ENCODE measurements at regions of chr16 and their contacts with region 1.

Region 1: DNA sequence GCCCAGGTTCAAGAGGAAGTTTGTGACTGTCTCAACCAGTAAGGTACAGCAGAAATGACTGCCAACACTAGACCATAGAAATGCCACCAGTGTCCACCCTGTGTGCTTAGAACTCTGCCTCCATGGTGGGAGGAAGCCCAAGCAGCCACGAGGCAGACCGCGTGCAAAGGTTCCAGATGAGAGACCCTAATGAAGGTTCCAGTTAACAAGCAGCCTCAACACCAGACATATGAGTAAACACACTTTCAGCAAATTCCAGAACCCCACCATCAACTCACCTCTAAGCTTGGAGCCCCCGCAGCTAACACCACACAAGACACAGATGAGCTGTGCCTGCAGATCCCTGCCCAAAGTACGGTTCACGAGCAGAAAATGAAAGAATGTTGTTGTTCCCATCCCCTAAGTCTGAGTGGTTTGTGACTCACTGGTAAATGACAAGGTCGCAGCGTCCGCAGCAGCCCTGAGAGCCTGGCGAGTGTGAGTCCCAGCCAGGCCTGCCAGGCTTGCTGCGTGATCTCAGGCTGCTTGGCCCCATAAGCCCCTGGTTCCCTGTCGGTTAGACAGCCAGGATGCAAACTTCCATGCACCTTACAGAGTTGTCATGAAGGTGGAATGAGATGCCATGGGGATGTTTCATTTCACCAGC is 193.7 kb downstream of the C16orf95 start:
- DNase-seq: peak in 1 of 2 donors; percentile 48
- H3K4me3 ChIP-seq: no peak overlapping the region
- H3K27ac ChIP-seq: no peak overlapping the region
- H3K4me1 ChIP-seq: peaks cover 0 to 30% (median 25%) of the 10 kb centered on the region in 4 donors
- H3K27me3 ChIP-seq: no peaks in the 10 kb centered on the region
- CTCF ChIP-seq: no peak

Region 2: DNA sequence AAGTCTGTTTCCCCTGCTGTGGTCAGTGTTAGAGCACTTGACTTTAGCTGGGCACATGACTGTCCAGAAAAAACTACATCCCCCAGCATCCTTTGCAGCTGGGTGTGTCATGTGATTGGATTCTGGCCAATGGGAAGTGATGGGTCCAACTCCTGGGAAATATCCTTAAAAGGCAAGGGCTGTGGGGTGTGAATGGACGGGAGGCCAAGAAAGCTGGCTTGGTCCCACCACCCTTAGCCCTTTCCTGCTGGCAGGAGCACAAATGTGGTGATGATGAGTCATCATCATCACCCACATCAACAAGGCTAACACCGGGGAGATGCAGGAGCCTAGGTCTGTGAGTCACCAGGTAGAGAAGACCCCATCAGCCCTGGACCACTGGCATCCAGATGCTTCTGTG is 148.0 kb before region 1 on chr16:
- intact Hi-C with region 1: no loop called
- DNase-seq: peak; percentile 61 to 86
- H3K4me3 ChIP-seq: no peak overlapping the region
- H3K27ac ChIP-seq: peak overlapping the region; percentile 67 to 69
- H3K4me1 ChIP-seq: peaks cover 0 to 13% (median 9%) of the 10 kb centered on the region in 4 donors
- H3K27me3 ChIP-seq: no peaks in the 10 kb centered on the region
- CTCF ChIP-seq: no peak

Region 3: GRCh38 chr16:87174061-87174460 is 50.6 kb after region 1 on chr16:
- intact Hi-C with region 1: loop called (anchors 2 kb)
- DNase-seq: no peak
- H3K4me3 ChIP-seq: no peak overlapping the region
- H3K27ac ChIP-seq: no peak overlapping the region
- H3K4me1 ChIP-seq: peaks cover 0 to 16% (median 14%) of the 10 kb centered on the region in 4 donors
- H3K27me3 ChIP-seq: no peaks in the 10 kb centered on the region
- CTCF ChIP-seq: no peak

Region 4: GRCh38 chr16:87305505-87306391 is 182.3 kb after region 1 on chr16:
- intact Hi-C with region 1: no loop called
- DNase-seq: no peak
- H3K4me3 ChIP-seq: no peak overlapping the region
- H3K27ac ChIP-seq: no peak overlapping the region
- H3K4me1 ChIP-seq: no peaks in the 10 kb centered on the region
- H3K27me3 ChIP-seq: no peaks in the 10 kb centered on the region
- CTCF ChIP-seq: no peak